Naive thymus-derived CD4-positive, alpha-beta T cell (primary cell): ENCODE measurements at regions of chr5 and their contacts with region 1.

Region 1: GRCh38 chr5:55096861-55097260 is 5.6 kb upstream of the GZMA start:
- DNase-seq: peak in 7 of 9 donors; percentile 61 to 83 (median 74)
- ATAC-seq: peak; percentile 85
- H3K4me3 ChIP-seq: peak overlapping the region; percentile 33
- H3K4me3 Mint-ChIP-seq: peak overlapping the region; percentile 16 to 79 (median 70)
- H3K27ac ChIP-seq: peak overlapping the region; percentile 59
- H3K27ac Mint-ChIP-seq: peak overlapping the region; percentile 88 to 100 (median 94)
- H3K4me1 ChIP-seq: peaks cover 42 to 52% of the 10 kb centered on the region in 2 donors
- H3K4me1 Mint-ChIP-seq: peaks cover 50 to 95% (median 90%) of the 10 kb centered on the region in 7 donors
- H3K27me3 ChIP-seq: no peaks in the 10 kb centered on the region
- H3K27me3 Mint-ChIP-seq: no peaks in the 10 kb centered on the region

Region 2: GRCh38 chr5:55037046-55037771 is 59.7 kb before region 1 on chr5:
- CTCF ChIA-PET with region 1: interaction called, 7 read pairs
- POLR2A ChIA-PET with region 1: interaction called, 11 read pairs
- intact Hi-C with region 1: loop called (anchors 1 to 2 kb)
- DNase-seq: peak in 8 of 9 donors; percentile 10 to 69 (median 50)
- ATAC-seq: peak; percentile 89
- H3K4me3 ChIP-seq: no peak overlapping the region
- H3K4me3 Mint-ChIP-seq: peak overlapping the region; percentile 6 to 55 (median 48)
- H3K27ac ChIP-seq: peak overlapping the region; percentile 49
- H3K27ac Mint-ChIP-seq: peak overlapping the region; percentile 55 to 99 (median 86)
- H3K4me1 ChIP-seq: peaks cover 17 to 31% of the 10 kb centered on the region in 2 donors
- H3K4me1 Mint-ChIP-seq: peaks cover 11 to 53% (median 32%) of the 10 kb centered on the region in 7 donors
- H3K27me3 ChIP-seq: no peaks in the 10 kb centered on the region
- H3K27me3 Mint-ChIP-seq: no peaks in the 10 kb centered on the region

Region 3: DNA sequence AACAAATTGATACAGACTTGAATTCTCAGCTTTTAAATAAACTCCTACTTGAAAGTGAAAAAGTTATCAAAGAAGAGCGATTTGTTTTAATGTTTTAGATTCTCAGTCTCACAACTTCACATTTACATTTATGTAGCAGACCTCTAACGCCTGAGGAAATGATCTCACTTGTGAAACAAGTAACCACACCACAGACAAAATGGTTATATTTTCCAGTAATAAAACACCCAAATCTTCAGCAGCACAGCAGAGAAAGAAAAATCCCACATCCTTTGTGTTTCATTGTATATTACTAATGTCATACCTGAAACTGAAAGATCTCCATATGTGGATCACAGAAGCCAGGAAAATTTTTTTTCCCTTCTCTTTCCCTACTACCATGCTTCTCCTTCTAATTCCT is 24.2 kb before region 1 on chr5:
- CTCF ChIA-PET with region 1: interaction called, 3 read pairs
- POLR2A ChIA-PET with region 1: interaction called, 18 read pairs
- intact Hi-C with region 1: loop called (anchors 1 kb)
- DNase-seq: peak in 7 of 9 donors; percentile 48 to 81 (median 70)
- ATAC-seq: peak; percentile 90
- H3K4me3 ChIP-seq: peak overlapping the region; percentile 28
- H3K4me3 Mint-ChIP-seq: peak overlapping the region; percentile 22 to 77 (median 60)
- H3K27ac ChIP-seq: peak overlapping the region; percentile 40
- H3K27ac Mint-ChIP-seq: peak overlapping the region; percentile 47 to 95 (median 69)
- H3K4me1 ChIP-seq: peaks cover 27 to 35% of the 10 kb centered on the region in 2 donors
- H3K4me1 Mint-ChIP-seq: peaks cover 15 to 54% (median 43%) of the 10 kb centered on the region in 7 donors
- H3K27me3 ChIP-seq: no peaks in the 10 kb centered on the region
- H3K27me3 Mint-ChIP-seq: no peaks in the 10 kb centered on the region

Region 4: DNA sequence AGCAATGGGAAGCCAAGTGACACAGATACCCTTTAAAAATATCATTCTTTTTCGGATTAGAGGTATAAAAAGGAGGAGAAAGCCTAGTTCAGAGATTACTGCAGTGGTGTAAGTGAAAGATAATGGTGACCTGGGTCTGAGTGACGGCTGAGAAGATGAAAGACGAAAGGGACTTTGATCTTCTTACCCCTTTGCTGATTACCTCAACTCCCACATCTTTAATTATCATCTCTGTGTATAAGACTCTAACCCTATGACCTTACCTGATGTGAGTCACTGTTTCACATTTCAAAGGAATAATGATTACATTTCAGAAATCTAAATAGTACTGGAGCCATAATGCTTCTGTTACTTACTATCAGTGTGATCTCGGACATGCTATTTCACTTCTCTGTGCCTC is 157.9 kb after region 1 on chr5:
- CTCF ChIA-PET with region 1: no interaction called
- POLR2A ChIA-PET with region 1: no interaction called
- intact Hi-C with region 1: no loop called
- DNase-seq: no peak
- ATAC-seq: no peak
- H3K4me3 ChIP-seq: no peak overlapping the region
- H3K4me3 Mint-ChIP-seq: no peak overlapping the region
- H3K27ac ChIP-seq: no peak overlapping the region
- H3K27ac Mint-ChIP-seq: no peak overlapping the region
- H3K4me1 ChIP-seq: no peaks in the 10 kb centered on the region
- H3K4me1 Mint-ChIP-seq: no peaks in the 10 kb centered on the region
- H3K27me3 ChIP-seq: no peaks in the 10 kb centered on the region
- H3K27me3 Mint-ChIP-seq: peaks cover 0 to 13% (median 0%) of the 10 kb centered on the region in 5 donors

Region 5: GRCh38 chr5:55711968-55712859 is 615.4 kb after region 1 on chr5 and contains the start of gene SLC38A9:
- CTCF ChIA-PET with region 1: no interaction called
- POLR2A ChIA-PET with region 1: no interaction called
- intact Hi-C with region 1: loop called in 1 of 2 experiments (anchors 5 kb)
- DNase-seq: peak; percentile 82 to 91 (median 90)
- ATAC-seq: peak; percentile 100
- H3K4me3 ChIP-seq: peak within 1 kb of the TSS; percentile 87
- H3K4me3 Mint-ChIP-seq: peak within 1 kb of the TSS; percentile 94 to 99 (median 98)
- H3K27ac ChIP-seq: peak within 1 kb of the TSS; percentile 72
- H3K27ac Mint-ChIP-seq: peak within 1 kb of the TSS; percentile 76 to 97 (median 91)
- H3K4me1 ChIP-seq: peaks cover 12 to 16% of the 10 kb centered on the region in 2 donors
- H3K4me1 Mint-ChIP-seq: peaks cover 20 to 40% (median 29%) of the 10 kb centered on the region in 7 donors
- H3K27me3 ChIP-seq: no peaks in the 10 kb centered on the region
- H3K27me3 Mint-ChIP-seq: peaks cover 0 to 3% (median 0%) of the 10 kb centered on the region in 5 donors
- total RNA-seq, gene SLC38A9: 17.7 to 32.6 (median 30.4) TPM